PC-9 (cell line): ENCODE measurements at regions of chr19 and their contacts with region 1.

Region 1: DNA sequence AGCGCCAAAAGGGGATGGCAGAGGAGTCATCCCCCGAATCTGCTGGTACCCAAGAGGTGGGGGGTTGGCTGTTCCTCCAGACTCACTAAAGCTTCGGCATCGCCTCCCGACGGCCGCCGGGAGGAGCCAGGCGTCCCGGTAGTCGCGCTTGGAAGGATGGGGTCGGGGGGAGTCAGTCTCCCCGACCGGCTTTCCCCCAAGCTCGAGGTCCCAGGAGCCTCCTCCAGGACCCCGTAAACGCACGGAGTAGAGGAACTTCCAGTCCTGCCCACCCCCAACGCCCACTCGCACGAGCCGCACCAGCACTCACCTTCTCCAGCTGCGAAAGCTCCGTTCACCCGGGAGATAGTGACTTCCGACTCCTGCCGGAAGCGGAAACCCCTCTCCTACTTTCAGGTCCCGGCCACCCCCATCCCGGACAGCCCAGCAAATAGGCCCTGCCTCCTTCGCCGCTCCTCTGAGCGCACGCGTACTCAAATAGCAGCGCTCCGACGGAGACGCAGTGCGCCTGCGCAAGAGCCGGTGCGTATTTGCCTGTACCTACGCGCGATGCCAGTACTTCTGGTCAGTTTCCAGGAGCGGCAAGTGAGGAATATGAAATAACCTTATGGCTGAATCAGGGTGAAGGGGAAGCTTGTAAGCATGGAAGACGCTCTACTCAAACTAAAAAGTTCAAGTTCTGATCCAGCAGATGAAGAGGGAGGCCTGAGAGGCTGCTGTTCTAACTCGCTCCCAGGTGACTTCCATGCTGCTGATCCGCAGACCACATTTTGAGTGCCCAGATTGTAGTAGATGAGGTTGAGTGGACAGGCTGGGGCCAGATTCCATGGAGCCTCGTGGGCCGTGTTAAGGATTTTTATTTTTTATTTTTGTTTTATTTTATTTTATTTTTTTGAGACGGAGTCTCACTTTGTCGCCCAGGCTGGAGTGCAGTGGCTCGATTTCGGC is at the start of gene ELOF1:
- DNase-seq: peak; percentile 97
- H3K4me3 ChIP-seq: peak within 1 kb of the TSS; percentile 97
- H3K27ac ChIP-seq: peak within 1 kb of the TSS; percentile 47; the same call in 1 of the 2 replicates
- H3K4me1 ChIP-seq: peaks cover 11% of the 10 kb centered on the region; the same call in 1 of the 2 replicates
- H3K27me3 ChIP-seq: no peaks in the 10 kb centered on the region
- CTCF ChIP-seq: peak; percentile 48
- total RNA-seq, gene ELOF1: 65.5 and 68.7 TPM in 2 replicates

Region 2: DNA sequence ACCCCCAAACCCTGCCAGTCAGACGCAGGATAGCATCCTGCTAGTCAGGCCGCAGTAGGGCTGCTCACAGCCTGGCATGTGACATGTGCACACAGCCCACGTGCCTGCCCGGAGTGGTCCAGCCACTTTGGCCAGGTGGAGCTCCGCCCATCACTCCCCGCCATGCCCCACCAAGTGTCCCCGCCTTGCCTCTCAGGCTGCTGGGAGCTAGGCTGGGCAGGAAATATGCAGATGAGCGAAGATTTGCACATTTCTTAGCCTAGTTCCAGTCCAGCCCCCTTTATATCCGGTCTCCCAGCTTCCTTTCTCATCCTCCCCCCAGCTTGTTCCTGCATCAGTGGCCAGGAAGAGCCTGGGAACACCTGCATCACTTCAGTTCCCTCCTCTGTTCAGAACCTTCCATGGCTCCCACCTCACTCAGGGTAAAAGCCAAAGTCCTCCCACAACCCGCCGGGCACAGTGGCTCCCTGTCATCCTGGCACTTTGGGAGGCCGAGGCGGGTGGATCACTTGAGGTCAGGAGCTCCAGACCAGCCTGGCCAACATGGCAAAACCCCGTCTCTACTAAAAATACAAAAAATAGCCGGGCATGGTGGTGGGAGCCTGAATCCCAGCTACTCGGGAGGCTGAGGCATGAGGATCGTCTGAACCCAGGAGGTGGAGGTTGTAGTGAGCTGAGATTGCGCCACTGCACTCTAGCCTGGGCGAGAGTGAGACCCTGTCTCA is 294.5 kb before region 1 on chr19:
- CTCF ChIA-PET with region 1: no interaction called
- POLR2A ChIA-PET with region 1: interaction called, 15 read pairs
- intact Hi-C with region 1: no loop called
- DNase-seq: peak; percentile 90 to 94
- H3K4me3 ChIP-seq: no peak overlapping the region
- H3K27ac ChIP-seq: peak overlapping the region; percentile 62
- H3K4me1 ChIP-seq: peaks cover 24% of the 10 kb centered on the region
- H3K27me3 ChIP-seq: no peaks in the 10 kb centered on the region
- CTCF ChIP-seq: no peak

Region 3: GRCh38 chr19:11463391-11463790 is 95.8 kb before region 1 on chr19:
- CTCF ChIA-PET with region 1: no interaction called
- POLR2A ChIA-PET with region 1: no interaction called
- intact Hi-C with region 1: no loop called
- DNase-seq: no peak
- H3K4me3 ChIP-seq: no peak overlapping the region
- H3K27ac ChIP-seq: no peak overlapping the region
- H3K4me1 ChIP-seq: no peaks in the 10 kb centered on the region
- H3K27me3 ChIP-seq: no peaks in the 10 kb centered on the region
- CTCF ChIP-seq: no peak

Region 4: GRCh38 chr19:11505032-11505503 is 54.1 kb before region 1 on chr19:
- CTCF ChIA-PET with region 1: no interaction called
- POLR2A ChIA-PET with region 1: interaction called, 3 read pairs
- intact Hi-C with region 1: loop called (anchors 2 kb)
- DNase-seq: peak; percentile 91 to 99
- H3K4me3 ChIP-seq: peak overlapping the region; percentile 81
- H3K27ac ChIP-seq: peak overlapping the region; percentile 67
- H3K4me1 ChIP-seq: peaks cover 11% of the 10 kb centered on the region
- H3K27me3 ChIP-seq: no peaks in the 10 kb centered on the region
- CTCF ChIP-seq: no peak

Region 5: GRCh38 chr19:11798391-11799330 is 239.5 kb after region 1 on chr19 and contains the start of gene ZNF491:
- CTCF ChIA-PET with region 1: no interaction called
- POLR2A ChIA-PET with region 1: no interaction called
- intact Hi-C with region 1: loop called (anchors 5 kb)
- DNase-seq: peak in 1 of 2 experiments; percentile 69
- H3K4me3 ChIP-seq: peak within 1 kb of the TSS; percentile 19; the same call in 1 of the 2 replicates
- H3K27ac ChIP-seq: no peak within 1 kb of the TSS
- H3K4me1 ChIP-seq: no peaks in the 10 kb centered on the region
- H3K27me3 ChIP-seq: no peaks in the 10 kb centered on the region
- CTCF ChIP-seq: no peak
- total RNA-seq, gene ZNF491: not detected in 2 replicates